CD8-positive, alpha-beta T cell (primary cell): ENCODE measurements at regions of chr7 and their contacts with region 1.

Region 1: DNA sequence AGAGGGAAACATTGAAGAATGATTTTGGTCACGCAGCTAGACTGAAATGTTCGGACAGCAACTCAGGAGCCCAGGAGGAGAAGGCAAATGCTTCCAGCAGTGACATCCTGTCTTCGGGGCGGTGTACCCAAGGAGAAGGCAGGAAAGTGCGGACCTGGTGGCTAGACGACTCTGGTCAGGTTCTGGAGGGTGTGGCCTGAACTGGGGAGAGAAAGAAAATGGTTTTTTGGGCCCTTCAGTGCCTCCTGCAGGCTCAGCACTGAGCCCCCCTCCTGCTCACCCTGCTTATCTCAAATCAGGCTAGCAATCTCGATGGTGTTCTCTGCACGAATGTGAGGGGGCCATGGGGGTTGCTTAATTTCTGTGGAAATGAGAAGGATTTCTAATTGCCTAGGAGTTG is 26.7 kb upstream of the TARP start:
- DNase-seq: peak in 2 of 9 experiments; percentile 58 to 68
- ATAC-seq: peak; percentile 62
- H3K4me3 ChIP-seq: peak overlapping the region in 1 of 2 experiments; percentile 54
- H3K4me3 Mint-ChIP-seq: peak overlapping the region; percentile 86
- H3K27ac ChIP-seq: peak overlapping the region; percentile 14 to 56
- H3K27ac Mint-ChIP-seq: peak overlapping the region; percentile 86
- H3K4me1 ChIP-seq: no peaks in the 10 kb centered on the region
- H3K4me1 Mint-ChIP-seq: peaks cover 18% of the 10 kb centered on the region
- H3K27me3 ChIP-seq: no peaks in the 10 kb centered on the region
- H3K27me3 Mint-ChIP-seq: no peaks in the 10 kb centered on the region
- CTCF ChIP-seq: no peak

Region 2: GRCh38 chr7:38257350-38257677 is 42.9 kb before region 1 on chr7:
- CTCF ChIA-PET with region 1: no interaction called
- POLR2A ChIA-PET with region 1: no interaction called
- intact Hi-C with region 1: loop called in 1 of 2 experiments (anchors 2 kb)
- DNase-seq: no peak
- ATAC-seq: no peak
- H3K4me3 ChIP-seq: no peak overlapping the region
- H3K4me3 Mint-ChIP-seq: no peak overlapping the region
- H3K27ac ChIP-seq: no peak overlapping the region
- H3K27ac Mint-ChIP-seq: peak overlapping the region; percentile 41
- H3K4me1 ChIP-seq: no peaks in the 10 kb centered on the region
- H3K4me1 Mint-ChIP-seq: peaks cover 7% of the 10 kb centered on the region
- H3K27me3 ChIP-seq: no peaks in the 10 kb centered on the region
- H3K27me3 Mint-ChIP-seq: no peaks in the 10 kb centered on the region
- CTCF ChIP-seq: no peak

Region 3: DNA sequence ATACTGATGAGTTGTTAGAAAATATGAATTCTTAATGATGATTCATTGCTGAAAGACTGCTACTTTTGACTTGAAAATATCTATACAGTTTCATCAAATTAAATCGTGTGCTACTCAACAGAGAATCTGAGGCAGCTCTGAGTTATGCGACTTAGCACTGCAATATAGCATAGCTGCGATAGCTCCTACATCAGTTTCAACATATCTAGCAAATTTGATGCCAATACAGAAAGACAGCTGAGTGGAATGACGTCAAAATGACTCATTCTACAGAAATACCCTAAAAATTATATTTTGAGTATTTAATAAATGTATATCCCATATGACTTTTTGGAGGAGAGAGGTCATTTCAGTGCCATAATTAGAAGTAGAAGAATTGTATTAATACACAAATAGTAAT is 25.7 kb before region 1 on chr7:
- CTCF ChIA-PET with region 1: no interaction called
- POLR2A ChIA-PET with region 1: no interaction called
- intact Hi-C with region 1: loop called (anchors 1 to 5 kb)
- DNase-seq: peak in 2 of 9 experiments; percentile 42 to 58
- ATAC-seq: peak; percentile 29
- H3K4me3 ChIP-seq: peak overlapping the region in 1 of 2 experiments; percentile 48
- H3K4me3 Mint-ChIP-seq: peak overlapping the region; percentile 39
- H3K27ac ChIP-seq: peak overlapping the region in 1 of 2 experiments; percentile 78
- H3K27ac Mint-ChIP-seq: no peak overlapping the region
- H3K4me1 ChIP-seq: no peaks in the 10 kb centered on the region
- H3K4me1 Mint-ChIP-seq: no peaks in the 10 kb centered on the region
- H3K27me3 ChIP-seq: no peaks in the 10 kb centered on the region
- H3K27me3 Mint-ChIP-seq: no peaks in the 10 kb centered on the region
- CTCF ChIP-seq: no peak

Region 4: GRCh38 chr7:39197831-39198230 is 897.7 kb after region 1 on chr7:
- CTCF ChIA-PET with region 1: no interaction called
- POLR2A ChIA-PET with region 1: no interaction called
- intact Hi-C with region 1: no loop called
- DNase-seq: no peak
- ATAC-seq: no peak
- H3K4me3 ChIP-seq: no peak overlapping the region
- H3K4me3 Mint-ChIP-seq: no peak overlapping the region
- H3K27ac ChIP-seq: no peak overlapping the region
- H3K27ac Mint-ChIP-seq: no peak overlapping the region
- H3K4me1 ChIP-seq: no peaks in the 10 kb centered on the region
- H3K4me1 Mint-ChIP-seq: no peaks in the 10 kb centered on the region
- H3K27me3 ChIP-seq: no peaks in the 10 kb centered on the region
- H3K27me3 Mint-ChIP-seq: no peaks in the 10 kb centered on the region
- CTCF ChIP-seq: no peak